Sigmoid colon (tissue), 7 donors: ENCODE measurements at regions of chr1 and their contacts with region 1.

Region 1: GRCh38 chr1:28505406-28506187 is at the start of gene RCC1:
- DNase-seq: peak; percentile 99
- H3K4me3 ChIP-seq: peak within 1 kb of the TSS; percentile 55 to 78 (median 71)
- H3K27ac ChIP-seq: peak within 1 kb of the TSS; percentile 77 to 93 (median 90)
- H3K4me1 ChIP-seq: peaks cover 5 to 47% (median 42%) of the 10 kb centered on the region in 4 donors
- H3K27me3 ChIP-seq: no peaks in the 10 kb centered on the region
- CTCF ChIP-seq: no peak
- EP300 ChIP-seq: peak in 1 of 4 donors; percentile 55
- POLR2A ChIP-seq: peak; percentile 93 to 94
- total RNA-seq, gene RCC1: 8.9 to 18.8 (median 10.8) TPM

Region 2: DNA sequence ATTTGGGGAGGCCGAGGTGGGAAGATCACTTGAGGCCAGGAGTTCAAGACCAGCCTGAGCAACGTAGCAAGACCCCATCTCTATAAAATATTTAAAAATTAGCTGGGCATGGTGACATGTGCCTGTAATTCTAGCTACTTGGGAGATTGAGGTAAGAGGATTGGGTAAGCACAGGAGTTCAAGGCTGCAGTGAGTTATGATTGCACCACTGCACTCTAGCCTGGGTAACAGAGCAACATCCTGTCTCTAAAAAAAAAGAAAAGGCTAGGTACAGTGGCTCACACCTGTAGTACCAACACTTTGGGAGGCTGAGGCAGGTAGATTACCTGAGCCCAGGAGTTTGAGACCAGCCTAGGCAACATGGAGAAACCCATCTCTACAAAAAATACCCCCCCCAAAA is 35.5 kb before region 1 on chr1:
- intact Hi-C with region 1: no loop called
- DNase-seq: no peak
- H3K4me3 ChIP-seq: no peak overlapping the region
- H3K27ac ChIP-seq: no peak overlapping the region
- H3K4me1 ChIP-seq: no peaks in the 10 kb centered on the region
- H3K27me3 ChIP-seq: no peaks in the 10 kb centered on the region
- CTCF ChIP-seq: no peak
- EP300 ChIP-seq: no peak
- POLR2A ChIP-seq: no peak

Region 3: DNA sequence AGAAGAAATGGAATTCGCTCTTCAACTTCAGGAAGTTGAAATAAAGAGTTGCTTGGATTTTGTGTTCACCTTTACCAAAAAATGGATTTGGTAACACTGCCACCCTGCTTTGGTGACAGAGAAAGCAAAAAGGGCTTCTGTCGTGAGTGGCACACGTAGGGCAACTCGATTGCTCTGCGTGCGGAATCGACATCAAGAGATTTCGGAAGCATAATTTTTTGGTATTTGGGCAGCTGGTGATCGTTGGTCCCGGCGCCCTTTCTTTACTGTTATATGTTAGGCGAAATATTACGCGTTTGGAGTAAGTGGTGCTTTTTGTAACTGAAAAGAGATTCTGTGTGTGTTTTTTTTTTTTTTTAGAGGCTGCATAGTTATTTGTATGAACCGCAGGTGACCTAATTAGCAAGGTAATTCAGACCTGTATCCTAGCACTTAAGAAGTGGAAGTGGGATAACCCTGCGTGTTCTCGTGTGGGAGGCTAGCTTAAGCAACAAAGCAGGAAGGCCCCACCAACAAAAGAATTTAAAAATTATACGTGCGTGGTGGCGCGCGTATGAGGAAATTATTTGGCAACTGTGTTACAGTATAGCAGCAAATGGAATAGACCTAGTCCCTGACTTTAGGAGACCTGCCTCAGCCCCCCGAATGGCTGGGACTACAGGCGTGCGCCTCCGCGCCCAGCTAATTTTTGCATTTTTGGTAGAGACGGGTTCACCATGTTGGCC is 143.0 kb after region 1 on chr1 and contains the start of gene RNU11:
- intact Hi-C with region 1: loop called (anchors 5 kb)
- DNase-seq: peak; percentile 95
- H3K4me3 ChIP-seq: peak within 1 kb of the TSS; percentile 18 to 48 (median 46)
- H3K27ac ChIP-seq: peak within 1 kb of the TSS; percentile 86 to 93 (median 90)
- H3K4me1 ChIP-seq: peaks cover 0 to 27% (median 21%) of the 10 kb centered on the region in 4 donors
- H3K27me3 ChIP-seq: no peaks in the 10 kb centered on the region
- CTCF ChIP-seq: peak in 1 of 4 experiments; percentile 26
- EP300 ChIP-seq: peak in 1 of 4 donors; percentile 22
- POLR2A ChIP-seq: peak; percentile 99 to 100
- total RNA-seq, gene RNU11: not detected

Region 4: GRCh38 chr1:28779751-28780408 is 274.3 kb after region 1 on chr1:
- intact Hi-C with region 1: no loop called
- DNase-seq: no peak
- H3K4me3 ChIP-seq: no peak overlapping the region
- H3K27ac ChIP-seq: no peak overlapping the region
- H3K4me1 ChIP-seq: peaks cover 0 to 11% (median 8%) of the 10 kb centered on the region in 4 donors
- H3K27me3 ChIP-seq: no peaks in the 10 kb centered on the region
- CTCF ChIP-seq: no peak
- EP300 ChIP-seq: no peak
- POLR2A ChIP-seq: no peak